AG04449 (cell line): ENCODE measurements at regions of chr17 and their contacts with region 1.

Region 1: DNA sequence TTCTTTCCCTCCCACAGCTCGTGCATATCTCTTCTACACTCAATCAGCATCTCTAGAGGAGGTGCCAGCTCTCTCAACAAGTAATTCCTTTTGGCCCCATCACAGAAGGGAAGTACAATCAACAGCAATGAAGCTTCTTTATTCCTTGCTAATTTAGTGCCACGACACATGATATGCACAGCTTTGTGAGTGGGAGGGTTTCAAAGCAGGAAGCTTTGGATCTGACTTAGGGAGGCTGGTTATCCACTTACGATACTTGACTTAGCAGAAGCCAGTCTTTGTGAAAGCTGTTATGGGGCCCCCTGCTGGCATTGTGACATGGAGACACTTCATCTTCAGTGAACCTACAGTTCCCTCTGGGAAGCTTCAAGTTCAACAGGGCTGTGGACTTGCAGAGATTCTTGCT is 81.0 kb downstream of the TMEM100 start:
- DNase-seq: peak; percentile 12
- H3K4me3 ChIP-seq: no peak overlapping the region
- CTCF ChIP-seq: peak; percentile 62

Region 2: DNA sequence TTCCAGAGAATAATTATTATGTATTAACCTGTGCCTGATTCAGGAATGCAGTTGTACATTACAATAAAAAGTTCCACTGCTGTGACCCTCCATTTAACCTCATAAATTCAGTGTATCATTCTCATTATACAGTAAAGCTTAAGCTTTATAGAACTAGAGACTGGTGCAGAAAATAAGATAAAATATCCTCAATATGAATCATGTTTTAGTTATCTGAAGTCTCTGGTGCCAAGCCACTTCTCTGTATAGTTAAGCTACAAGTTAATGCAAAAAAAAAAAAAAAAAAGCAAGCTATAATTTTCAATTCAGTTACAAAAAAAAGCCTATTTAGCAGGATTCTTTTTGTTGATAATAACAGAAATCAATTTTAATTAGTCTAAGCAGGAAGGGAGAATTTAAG is 108.1 kb before region 1 on chr17:
- CTCF ChIA-PET with region 1: interaction called, 25 read pairs
- POLR2A ChIA-PET with region 1: no interaction called
- DNase-seq: no peak
- H3K4me3 ChIP-seq: no peak overlapping the region
- CTCF ChIP-seq: no peak

Region 3: DNA sequence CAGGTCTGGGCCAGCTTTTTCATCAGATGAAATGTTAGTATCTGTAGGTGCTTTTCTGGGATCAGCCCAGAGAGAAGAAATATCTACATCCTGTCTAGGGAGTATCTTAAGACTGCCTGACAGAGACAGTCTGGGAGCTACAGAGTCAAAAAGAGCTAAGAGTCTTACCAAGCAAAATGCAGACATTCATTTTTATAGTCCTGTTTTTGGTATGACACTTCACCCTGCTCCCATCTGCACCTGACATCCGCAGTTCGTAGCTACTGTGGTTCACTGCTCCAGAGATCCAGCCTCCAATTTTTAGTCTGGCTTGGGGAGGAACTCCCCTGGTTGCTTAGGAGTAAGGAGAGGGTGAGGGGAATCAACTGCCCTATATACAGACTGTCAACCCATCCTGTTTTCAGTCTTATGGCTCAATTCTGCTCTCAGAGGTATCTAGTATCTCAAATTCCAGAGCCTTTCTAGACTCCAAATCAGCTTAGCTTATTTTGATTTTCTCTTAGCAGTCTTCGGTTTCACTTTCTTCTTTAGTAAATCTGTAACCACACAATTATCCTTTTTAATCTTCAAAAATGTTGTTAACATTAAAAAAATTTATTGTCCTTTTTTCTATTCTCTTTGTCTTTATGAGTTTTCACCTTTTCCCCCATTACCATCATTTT is 16.8 kb before region 1 on chr17:
- CTCF ChIA-PET with region 1: interaction called, 11 read pairs
- POLR2A ChIA-PET with region 1: no interaction called
- DNase-seq: no peak
- H3K4me3 ChIP-seq: no peak overlapping the region
- CTCF ChIP-seq: no peak

Region 4: GRCh38 chr17:56222255-56222654 is 580.6 kb after region 1 on chr17:
- CTCF ChIA-PET with region 1: no interaction called
- POLR2A ChIA-PET with region 1: no interaction called
- DNase-seq: no peak
- H3K4me3 ChIP-seq: no peak overlapping the region
- CTCF ChIP-seq: no peak